Mammary epithelial cell (primary cell): ENCODE measurements at regions of chr4 and their contacts with region 1.

Region 1: DNA sequence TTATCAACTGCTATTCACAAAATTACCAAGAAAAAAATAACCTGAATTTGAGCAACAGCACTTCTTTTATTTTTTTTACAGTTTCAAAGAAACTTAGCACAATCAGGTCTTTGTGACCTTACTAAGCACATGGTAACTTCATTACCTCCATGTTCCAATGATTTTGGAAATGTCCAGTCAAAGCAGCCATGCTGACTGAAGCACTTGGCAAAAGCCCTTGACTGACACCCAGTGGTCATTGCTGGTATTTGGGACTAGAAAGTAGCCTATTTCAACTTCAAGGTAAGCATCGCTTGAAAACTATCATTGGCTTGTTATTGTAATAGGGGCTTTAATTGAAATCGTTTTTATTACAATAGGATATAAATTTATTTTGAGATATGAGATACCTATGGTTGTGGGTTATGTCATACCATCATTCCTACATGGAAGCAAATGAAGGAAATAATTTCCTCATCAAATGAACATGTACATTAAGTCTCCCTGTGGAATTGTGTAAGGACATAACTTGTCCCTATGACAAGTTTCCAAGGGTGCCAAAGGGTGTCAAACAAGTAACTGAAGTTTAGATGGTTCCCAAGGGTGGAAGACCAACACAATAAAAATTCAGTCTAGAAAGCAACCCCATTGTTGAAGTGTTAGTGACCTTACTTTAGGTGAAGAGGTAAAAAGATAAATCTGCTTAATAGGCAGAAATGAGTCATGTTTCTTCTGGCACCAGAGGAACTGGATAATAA is 15.2 kb upstream of the ANXA10 start:
- DNase-seq: peak; percentile 59
- H3K4me3 ChIP-seq: no peak overlapping the region
- H3K27ac ChIP-seq: no peak overlapping the region
- H3K4me1 ChIP-seq: no peaks in the 10 kb centered on the region
- H3K27me3 ChIP-seq: no peaks in the 10 kb centered on the region
- CTCF ChIP-seq: peak; percentile 97 to 99

Region 2: GRCh38 chr4:167021545-167022155 is 1055.5 kb before region 1 on chr4:
- CTCF ChIA-PET with region 1: no interaction called
- dilution Hi-C with region 1: no loop called
- in situ Hi-C with region 1: no loop called
- intact Hi-C with region 1: loop called (anchors 2 kb)
- DNase-seq: peak; percentile 52
- H3K4me3 ChIP-seq: no peak overlapping the region
- H3K27ac ChIP-seq: no peak overlapping the region
- H3K4me1 ChIP-seq: no peaks in the 10 kb centered on the region
- H3K27me3 ChIP-seq: no peaks in the 10 kb centered on the region
- CTCF ChIP-seq: peak; percentile 62 to 82

Region 3: GRCh38 chr4:167443841-167444240 is 633.3 kb before region 1 on chr4:
- CTCF ChIA-PET with region 1: no interaction called
- dilution Hi-C with region 1: no loop called
- in situ Hi-C with region 1: no loop called
- intact Hi-C with region 1: loop called (anchors 1 kb)
- DNase-seq: no peak
- H3K4me3 ChIP-seq: no peak overlapping the region
- H3K27ac ChIP-seq: no peak overlapping the region
- H3K4me1 ChIP-seq: no peaks in the 10 kb centered on the region
- H3K27me3 ChIP-seq: peaks cover 3% of the 10 kb centered on the region
- CTCF ChIP-seq: no peak

Region 4: DNA sequence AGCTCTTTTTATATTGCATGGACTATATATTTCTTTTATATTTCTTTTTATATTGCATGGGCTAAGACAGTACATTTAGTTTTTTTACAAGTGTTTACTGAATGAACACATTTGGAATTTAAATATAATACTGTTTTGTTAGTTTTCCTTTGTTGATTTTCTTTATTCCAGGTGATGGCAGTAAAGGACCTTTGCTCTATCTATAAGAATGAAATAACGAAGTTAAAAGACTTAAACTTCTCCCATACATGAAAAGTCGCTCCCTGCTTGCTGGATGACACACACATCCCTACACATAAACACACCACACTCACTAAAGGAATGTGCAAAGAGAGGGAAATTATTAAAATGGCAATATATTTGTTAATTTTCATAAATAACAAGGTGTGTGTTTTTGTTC is 87.3 kb before region 1 on chr4:
- CTCF ChIA-PET with region 1: no interaction called
- dilution Hi-C with region 1: no loop called
- in situ Hi-C with region 1: no loop called
- intact Hi-C with region 1: loop called (anchors 1 kb)
- DNase-seq: no peak
- H3K4me3 ChIP-seq: no peak overlapping the region
- H3K27ac ChIP-seq: no peak overlapping the region
- H3K4me1 ChIP-seq: no peaks in the 10 kb centered on the region
- H3K27me3 ChIP-seq: peaks cover 5% of the 10 kb centered on the region
- CTCF ChIP-seq: peak; percentile 4 to 35

Region 5: DNA sequence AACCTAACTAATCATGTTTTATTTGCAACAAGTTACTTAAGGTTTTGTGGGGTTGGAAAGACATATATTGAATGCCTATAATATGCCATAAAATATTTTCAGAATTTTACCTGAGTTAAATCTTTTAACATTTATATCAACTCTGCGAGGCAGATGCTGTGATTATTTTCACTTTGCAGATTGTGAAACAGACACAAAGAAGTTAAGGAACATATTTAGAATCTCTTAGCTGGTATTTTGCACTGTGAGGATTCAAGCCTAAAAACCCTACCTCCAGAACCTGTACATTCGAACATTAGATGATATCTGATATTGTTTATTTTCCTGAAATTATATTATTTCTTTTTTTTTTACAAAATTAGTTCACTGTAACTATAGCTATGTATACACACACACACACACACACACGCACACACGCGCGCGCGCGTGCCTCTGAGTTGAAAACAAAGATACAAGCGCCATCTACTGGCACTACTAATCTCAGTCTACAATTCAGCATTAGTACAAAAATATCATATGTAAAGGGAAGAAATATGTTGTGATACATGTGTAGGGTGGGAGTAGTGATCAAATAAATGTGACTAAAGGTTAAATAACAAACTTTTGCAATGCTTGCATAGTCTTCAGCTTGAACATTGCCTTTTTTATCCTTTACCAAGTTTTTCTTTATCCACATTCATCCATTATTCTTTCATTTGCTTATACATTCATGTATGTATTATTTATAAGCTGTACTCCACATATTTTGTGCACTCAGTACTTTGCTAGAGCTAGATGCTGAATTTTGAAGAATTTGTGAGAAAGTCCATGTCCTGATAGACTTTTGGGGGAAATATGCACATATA is 76.7 kb after region 1 on chr4:
- CTCF ChIA-PET with region 1: no interaction called
- dilution Hi-C with region 1: no loop called
- in situ Hi-C with region 1: no loop called
- intact Hi-C with region 1: loop called (anchors 1 kb)
- DNase-seq: peak; percentile 62
- H3K4me3 ChIP-seq: peak overlapping the region; percentile 14 to 44 (median 39)
- H3K27ac ChIP-seq: no peak overlapping the region
- H3K4me1 ChIP-seq: peaks cover 4% of the 10 kb centered on the region
- H3K27me3 ChIP-seq: no peaks in the 10 kb centered on the region
- CTCF ChIP-seq: peak; percentile 76 to 78